Esophagus muscularis mucosa (tissue), 4 donors: ENCODE measurements at regions of chr18 and their contacts with region 1.

Region 1: GRCh38 chr18:24930971-24931370 is 421.0 kb downstream of the ZNF521 start:
- DNase-seq: no peak
- H3K4me3 ChIP-seq: no peak overlapping the region
- H3K27ac ChIP-seq: no peak overlapping the region
- H3K4me1 ChIP-seq: no peaks in the 10 kb centered on the region
- H3K27me3 ChIP-seq: peaks cover 0 to 4% (median 0%) of the 10 kb centered on the region in 4 donors
- CTCF ChIP-seq: no peak
- EP300 ChIP-seq: no peak
- POLR2A ChIP-seq: no peak

Region 2: GRCh38 chr18:24915547-24915946 is 15.4 kb before region 1 on chr18:
- intact Hi-C with region 1: no loop called
- DNase-seq: no peak
- H3K4me3 ChIP-seq: no peak overlapping the region
- H3K27ac ChIP-seq: no peak overlapping the region
- H3K4me1 ChIP-seq: peaks cover 0 to 10% (median 2%) of the 10 kb centered on the region in 4 donors
- H3K27me3 ChIP-seq: peaks cover 0 to 14% (median 2%) of the 10 kb centered on the region in 4 donors
- CTCF ChIP-seq: no peak
- EP300 ChIP-seq: no peak
- POLR2A ChIP-seq: no peak

Region 3: DNA sequence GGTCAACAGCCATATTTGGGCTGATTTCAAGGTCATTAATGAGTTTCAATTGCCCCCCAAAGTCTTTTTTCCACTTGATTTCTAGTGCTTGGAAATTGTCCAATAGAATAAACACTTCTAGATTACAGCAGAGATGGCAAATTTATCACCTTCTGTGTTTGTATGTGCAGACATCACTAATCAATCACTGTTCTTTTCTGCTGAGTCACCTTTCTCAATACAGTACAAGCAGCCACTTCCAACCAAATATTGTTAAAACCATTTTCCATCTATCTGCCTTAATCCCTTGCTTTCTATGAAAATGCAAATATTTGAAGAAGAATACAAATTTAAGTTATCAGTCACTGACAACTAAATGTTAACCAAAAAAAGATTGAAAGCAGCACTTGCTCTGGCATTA is 461.2 kb after region 1 on chr18:
- intact Hi-C with region 1: loop called (anchors 10 kb)
- DNase-seq: no peak
- H3K4me3 ChIP-seq: no peak overlapping the region
- H3K27ac ChIP-seq: no peak overlapping the region
- H3K4me1 ChIP-seq: no peaks in the 10 kb centered on the region
- H3K27me3 ChIP-seq: peaks cover 0 to 12% (median 0%) of the 10 kb centered on the region in 4 donors
- CTCF ChIP-seq: no peak
- EP300 ChIP-seq: no peak
- POLR2A ChIP-seq: no peak